CD4-positive, alpha-beta memory T cell (primary cell): ENCODE measurements at regions of chr13 and their contacts with region 1.

Region 1: GRCh38 chr13:79385694-79386093 is 20.4 kb downstream of the RBM26 start:
- DNase-seq: peak in 1 of 5 donors; percentile 42
- H3K4me3 ChIP-seq: no peak overlapping the region
- H3K4me3 Mint-ChIP-seq: peak overlapping the region in 1 of 8 donors; percentile 14
- H3K27ac ChIP-seq: no peak overlapping the region
- H3K27ac Mint-ChIP-seq: peak overlapping the region in 2 of 7 donors; percentile 52 to 66
- H3K4me1 ChIP-seq: peaks cover 82% of the 10 kb centered on the region
- H3K4me1 Mint-ChIP-seq: peaks cover 47 to 77% (median 63%) of the 10 kb centered on the region in 4 donors
- H3K27me3 ChIP-seq: no peaks in the 10 kb centered on the region
- H3K27me3 Mint-ChIP-seq: no peaks in the 10 kb centered on the region

Region 2: GRCh38 chr13:79056706-79057105 is 329.0 kb before region 1 on chr13:
- CTCF ChIA-PET with region 1: no interaction called
- POLR2A ChIA-PET with region 1: no interaction called
- intact Hi-C with region 1: no loop called
- DNase-seq: no peak
- H3K4me3 ChIP-seq: no peak overlapping the region
- H3K4me3 Mint-ChIP-seq: no peak overlapping the region
- H3K27ac ChIP-seq: no peak overlapping the region
- H3K27ac Mint-ChIP-seq: no peak overlapping the region
- H3K4me1 ChIP-seq: no peaks in the 10 kb centered on the region
- H3K4me1 Mint-ChIP-seq: no peaks in the 10 kb centered on the region
- H3K27me3 ChIP-seq: no peaks in the 10 kb centered on the region
- H3K27me3 Mint-ChIP-seq: peaks cover 2 to 4% of the 10 kb centered on the region in 2 donors

Region 3: GRCh38 chr13:79320433-79320832 is 65.3 kb before region 1 on chr13:
- CTCF ChIA-PET with region 1: no interaction called
- POLR2A ChIA-PET with region 1: no interaction called
- intact Hi-C with region 1: loop called (anchors 5 kb)
- DNase-seq: no peak
- H3K4me3 ChIP-seq: no peak overlapping the region
- H3K4me3 Mint-ChIP-seq: no peak overlapping the region
- H3K27ac ChIP-seq: no peak overlapping the region
- H3K27ac Mint-ChIP-seq: peak overlapping the region in 1 of 7 donors; percentile 75
- H3K4me1 ChIP-seq: no peaks in the 10 kb centered on the region
- H3K4me1 Mint-ChIP-seq: peaks cover 0 to 1% (median 0%) of the 10 kb centered on the region in 4 donors
- H3K27me3 ChIP-seq: no peaks in the 10 kb centered on the region
- H3K27me3 Mint-ChIP-seq: no peaks in the 10 kb centered on the region

Region 4: GRCh38 chr13:79336966-79337365 is 48.7 kb before region 1 on chr13:
- CTCF ChIA-PET with region 1: interaction called, 5 read pairs
- POLR2A ChIA-PET with region 1: no interaction called
- intact Hi-C with region 1: loop called (anchors 5 kb)
- DNase-seq: no peak
- H3K4me3 ChIP-seq: no peak overlapping the region
- H3K4me3 Mint-ChIP-seq: no peak overlapping the region
- H3K27ac ChIP-seq: no peak overlapping the region
- H3K27ac Mint-ChIP-seq: no peak overlapping the region
- H3K4me1 ChIP-seq: no peaks in the 10 kb centered on the region
- H3K4me1 Mint-ChIP-seq: peaks cover 0 to 5% (median 3%) of the 10 kb centered on the region in 4 donors
- H3K27me3 ChIP-seq: no peaks in the 10 kb centered on the region
- H3K27me3 Mint-ChIP-seq: no peaks in the 10 kb centered on the region